Activated CD8-positive, alpha-beta memory T cell treated with anti-CD3 and anti-CD28 coated beads, Interleukin-2, amount 10 ng/mL, durations not matched to agents 7 days and 5 days (primary cell): ENCODE measurements at regions of chr17 and their contacts with region 1.

Region 1: GRCh38 chr17:35849469-35850348 is 19.0 kb downstream of the HEATR9 start:
- DNase-seq: peak; percentile 81
- ATAC-seq: peak; percentile 95
- H3K4me3 Mint-ChIP-seq: no peak overlapping the region
- H3K27ac Mint-ChIP-seq: peak overlapping the region; percentile 82
- H3K4me1 Mint-ChIP-seq: peaks cover 24% of the 10 kb centered on the region
- H3K27me3 Mint-ChIP-seq: no peaks in the 10 kb centered on the region

Region 2: DNA sequence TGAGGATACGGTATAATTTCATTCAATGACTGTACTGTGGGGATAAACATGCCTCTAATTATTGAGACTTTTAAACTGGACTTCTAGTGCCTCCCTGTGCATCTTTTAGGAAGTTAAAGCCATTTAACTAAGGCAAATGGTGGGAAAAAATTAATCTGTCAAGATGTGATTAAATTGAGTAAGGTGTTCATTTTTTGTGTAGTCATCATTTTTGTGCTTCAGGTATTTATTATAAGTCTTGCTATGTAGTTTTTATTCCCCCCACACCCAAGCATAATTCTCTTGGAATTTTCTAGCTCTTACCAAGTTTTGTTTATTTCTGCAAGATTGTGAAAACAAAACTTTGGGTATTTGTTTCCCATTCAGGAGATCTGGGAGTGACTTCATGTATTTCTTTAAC is 30.3 kb before region 1 on chr17:
- CTCF ChIA-PET with region 1: interaction called, 16 read pairs
- DNase-seq: no peak
- ATAC-seq: no peak
- H3K4me3 Mint-ChIP-seq: no peak overlapping the region
- H3K27ac Mint-ChIP-seq: peak overlapping the region; percentile 31
- H3K4me1 Mint-ChIP-seq: peaks cover 35% of the 10 kb centered on the region
- H3K27me3 Mint-ChIP-seq: no peaks in the 10 kb centered on the region

Region 3: DNA sequence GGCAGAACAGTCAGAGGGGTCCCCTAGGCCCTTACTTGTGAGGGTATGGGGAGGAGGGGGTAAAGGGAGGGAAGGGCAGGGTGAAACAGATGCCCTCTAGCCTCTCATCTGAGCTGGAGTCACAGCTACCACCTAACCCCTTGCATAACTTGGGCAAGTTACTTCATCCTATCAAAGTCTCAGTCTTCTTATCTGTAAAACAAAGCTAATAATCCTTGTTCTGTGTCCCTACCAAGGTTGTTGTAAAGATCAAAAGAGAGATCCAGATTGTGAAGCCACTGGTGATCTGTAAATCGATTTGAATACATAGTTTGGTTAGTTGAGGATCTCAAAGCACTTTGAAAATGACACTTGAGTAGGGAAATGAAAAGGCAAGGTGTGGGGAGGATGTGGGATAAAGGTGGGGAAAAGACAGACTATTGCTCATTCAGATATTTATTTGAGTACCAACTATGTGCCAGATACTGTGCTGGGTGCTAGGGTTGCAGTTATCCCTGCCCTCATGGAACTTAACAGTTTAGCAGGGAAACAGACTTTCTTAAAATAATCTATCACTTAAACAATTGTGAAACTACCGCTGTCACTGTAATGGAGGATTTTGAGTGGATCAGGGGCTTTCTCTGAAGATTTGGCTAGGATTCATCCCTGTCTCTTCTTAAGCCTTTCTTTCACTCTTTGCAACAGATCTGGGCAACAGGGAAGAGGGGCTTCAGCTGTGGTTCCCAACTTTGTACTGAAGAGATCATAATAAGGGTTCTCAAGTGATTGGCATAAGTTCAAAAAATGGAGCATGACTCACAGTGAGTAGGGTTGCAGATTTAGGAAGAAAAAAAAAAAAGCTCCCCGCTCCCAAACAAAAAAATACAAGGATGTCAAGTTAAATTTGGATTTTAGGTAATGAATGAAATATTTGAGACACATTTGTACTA is 16.0 kb after region 1 on chr17:
- CTCF ChIA-PET with region 1: interaction called, 10 read pairs
- DNase-seq: no peak
- ATAC-seq: no peak
- H3K4me3 Mint-ChIP-seq: no peak overlapping the region
- H3K27ac Mint-ChIP-seq: peak overlapping the region; percentile 26
- H3K4me1 Mint-ChIP-seq: peaks cover 30% of the 10 kb centered on the region
- H3K27me3 Mint-ChIP-seq: no peaks in the 10 kb centered on the region

Region 4: DNA sequence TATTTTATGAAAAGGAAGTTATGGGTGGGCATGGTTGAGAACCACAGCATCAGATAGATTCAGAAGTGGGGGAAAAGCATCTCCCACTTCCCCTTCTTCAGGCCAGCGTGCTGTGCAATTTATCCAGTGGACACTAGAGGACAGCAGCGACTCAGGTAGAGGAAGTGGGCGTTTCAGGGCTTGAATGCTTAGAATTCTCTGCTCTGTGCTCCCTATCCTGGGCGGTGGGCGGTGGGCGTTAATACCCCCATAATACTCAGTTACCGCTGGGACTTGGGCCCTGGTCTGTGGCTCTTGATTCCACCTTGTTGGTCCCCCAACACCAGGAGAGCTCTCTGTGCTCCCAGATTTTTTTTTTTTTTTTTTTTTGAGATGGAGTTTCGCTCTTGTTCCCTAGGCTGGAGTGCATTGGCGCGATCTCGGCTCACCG is 97.5 kb after region 1 on chr17:
- CTCF ChIA-PET with region 1: interaction called, 35 read pairs
- DNase-seq: peak; percentile 78
- ATAC-seq: peak; percentile 91
- H3K4me3 Mint-ChIP-seq: no peak overlapping the region
- H3K27ac Mint-ChIP-seq: no peak overlapping the region
- H3K4me1 Mint-ChIP-seq: peaks cover 13% of the 10 kb centered on the region
- H3K27me3 Mint-ChIP-seq: no peaks in the 10 kb centered on the region

Region 5: DNA sequence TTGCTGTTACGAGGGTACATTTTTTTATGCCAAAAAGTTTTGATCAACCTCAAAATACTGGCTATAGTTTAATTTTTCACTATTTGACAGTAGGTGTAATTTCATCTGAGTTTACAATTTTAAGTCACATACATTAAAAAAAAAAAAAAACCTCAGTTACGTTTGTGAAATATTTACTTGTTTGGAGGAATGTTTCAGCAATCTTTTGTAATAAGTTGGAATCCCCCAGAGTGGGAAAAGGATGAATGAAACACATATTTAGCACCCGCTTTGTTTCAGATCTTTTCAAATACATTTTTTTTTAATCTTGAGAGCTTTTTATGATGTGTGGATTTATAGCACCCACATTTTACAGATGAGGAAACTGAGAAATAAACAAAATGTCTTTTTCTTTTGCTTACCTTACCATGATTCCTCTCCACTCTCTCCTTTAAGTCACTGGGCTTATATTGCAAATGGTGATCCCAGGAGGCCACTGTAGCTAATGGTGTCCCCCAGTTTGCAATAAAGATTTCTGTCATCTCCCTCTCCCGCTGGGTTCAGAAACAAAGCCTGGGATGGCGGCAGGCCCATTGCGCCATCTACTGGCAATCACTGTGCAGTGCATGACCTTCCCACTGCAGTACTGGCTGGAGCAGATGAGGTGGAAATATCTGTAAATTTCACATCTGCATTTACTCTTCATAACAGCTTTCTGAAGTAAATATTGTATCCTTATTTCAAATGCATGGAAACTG is 299.0 kb after region 1 on chr17:
- CTCF ChIA-PET with region 1: interaction called, 12 read pairs
- DNase-seq: peak; percentile 81
- ATAC-seq: peak; percentile 95
- H3K4me3 Mint-ChIP-seq: peak overlapping the region; percentile 50
- H3K27ac Mint-ChIP-seq: peak overlapping the region; percentile 67
- H3K4me1 Mint-ChIP-seq: peaks cover 44% of the 10 kb centered on the region
- H3K27me3 Mint-ChIP-seq: peaks cover 17% of the 10 kb centered on the region